Naive thymus-derived CD8-positive, alpha-beta T cell (primary cell): ENCODE measurements at regions of chr1 and their contacts with region 1.

Region 1: DNA sequence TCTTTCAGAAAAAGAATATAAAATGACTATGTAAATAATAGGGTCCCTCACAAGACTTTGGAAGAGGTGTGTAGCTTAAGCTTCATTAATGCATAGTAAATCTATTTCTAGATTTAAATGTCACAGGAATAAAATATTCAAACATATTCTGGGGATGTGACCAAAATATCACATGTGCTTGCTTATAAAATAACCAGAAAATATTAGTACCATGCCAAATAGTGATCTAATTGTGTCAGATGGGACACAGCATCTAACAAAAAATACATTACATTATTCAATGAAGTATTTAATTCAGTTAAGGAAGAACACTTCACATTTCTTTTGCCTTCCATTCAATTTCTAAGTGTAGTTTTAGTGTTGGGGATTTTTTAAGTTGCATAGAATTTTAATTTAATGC is 179.5 kb downstream of the LRRC40 start:
- DNase-seq: no peak
- ATAC-seq: no peak
- H3K4me3 Mint-ChIP-seq: no peak overlapping the region
- H3K27ac Mint-ChIP-seq: no peak overlapping the region
- H3K4me1 Mint-ChIP-seq: no peaks in the 10 kb centered on the region
- H3K27me3 Mint-ChIP-seq: no peaks in the 10 kb centered on the region

Region 2: GRCh38 chr1:70517444-70517843 is 491.6 kb after region 1 on chr1:
- POLR2A ChIA-PET with region 1: interaction called, 10 read pairs
- DNase-seq: no peak
- ATAC-seq: no peak
- H3K4me3 Mint-ChIP-seq: no peak overlapping the region
- H3K27ac Mint-ChIP-seq: no peak overlapping the region
- H3K4me1 Mint-ChIP-seq: no peaks in the 10 kb centered on the region
- H3K27me3 Mint-ChIP-seq: peaks cover 0 to 4% (median 0%) of the 10 kb centered on the region in 5 donors